ENCODE measurements at regions of chr12 and their contacts with region 1.

Region 1: GRCh38 chr12:27751386-27752047 is 28.5 kb upstream of the KLHL42 start:
- DNase-seq: peak; percentile 88
- H3K4me3 Mint-ChIP-seq: no peak overlapping the region
- H3K27ac Mint-ChIP-seq: peak overlapping the region; percentile 74
- H3K4me1 Mint-ChIP-seq: peaks cover 23% of the 10 kb centered on the region
- H3K27me3 Mint-ChIP-seq: no peaks in the 10 kb centered on the region
- CTCF ChIP-seq: no peak

Region 2: GRCh38 chr12:27779920-27780611 is 28.5 kb after region 1 on chr12 and contains the starts of genes KLHL42 and MANSC4:
- CTCF ChIA-PET with region 1: no interaction called
- POLR2A ChIA-PET with region 1: interaction called, 21 read pairs
- intact Hi-C with region 1: loop called (anchors 2 kb)
- DNase-seq: peak; percentile 67
- H3K4me3 Mint-ChIP-seq: peak within 1 kb of the TSS; percentile 77
- H3K27ac Mint-ChIP-seq: peak within 1 kb of the TSS; percentile 63
- H3K4me1 Mint-ChIP-seq: peaks cover 21% of the 10 kb centered on the region
- H3K27me3 Mint-ChIP-seq: no peaks in the 10 kb centered on the region
- CTCF ChIP-seq: no peak
- total RNA-seq, gene KLHL42: 32.5 and 37.6 TPM in 2 replicates
- total RNA-seq, gene MANSC4: not detected in 2 replicates

Measured in MCF 10A (cell line).